ENCODE measurements at regions of chr7 and their contacts with region 1.

Region 1: GRCh38 chr7:47571331-47572093 is 10.4 kb downstream of the TNS3 start:
- DNase-seq: peak in 1 of 2 experiments; percentile 91
- H3K4me3 ChIP-seq: no peak overlapping the region
- H3K27ac ChIP-seq: no peak overlapping the region
- H3K4me1 ChIP-seq: peaks cover 47% of the 10 kb centered on the region
- H3K27me3 ChIP-seq: no peaks in the 10 kb centered on the region
- CTCF ChIP-seq: no peak

Region 2: GRCh38 chr7:47266131-47266706 is 305.3 kb before region 1 on chr7:
- CTCF ChIA-PET with region 1: no interaction called
- POLR2A ChIA-PET with region 1: no interaction called
- intact Hi-C with region 1: loop called (anchors 2 kb)
- DNase-seq: peak; percentile 49 to 73
- H3K4me3 ChIP-seq: no peak overlapping the region
- H3K27ac ChIP-seq: no peak overlapping the region
- H3K4me1 ChIP-seq: peaks cover 10% of the 10 kb centered on the region
- H3K27me3 ChIP-seq: no peaks in the 10 kb centered on the region
- CTCF ChIP-seq: peak; percentile 100

Region 3: GRCh38 chr7:47466894-47467293 is 104.6 kb before region 1 on chr7:
- CTCF ChIA-PET with region 1: no interaction called
- POLR2A ChIA-PET with region 1: no interaction called
- intact Hi-C with region 1: no loop called
- DNase-seq: no peak
- H3K4me3 ChIP-seq: no peak overlapping the region
- H3K27ac ChIP-seq: no peak overlapping the region
- H3K4me1 ChIP-seq: no peaks in the 10 kb centered on the region
- H3K27me3 ChIP-seq: no peaks in the 10 kb centered on the region
- CTCF ChIP-seq: no peak

Region 4: GRCh38 chr7:47482013-47482875 is 89.3 kb before region 1 on chr7:
- CTCF ChIA-PET with region 1: interaction called, 5 read pairs
- POLR2A ChIA-PET with region 1: no interaction called
- intact Hi-C with region 1: loop called (anchors 2 kb)
- DNase-seq: peak; percentile 82 to 99
- H3K4me3 ChIP-seq: peak overlapping the region; percentile 15; the same call in 1 of the 2 replicates
- H3K27ac ChIP-seq: peak overlapping the region; percentile 90
- H3K4me1 ChIP-seq: peaks cover 85% of the 10 kb centered on the region
- H3K27me3 ChIP-seq: no peaks in the 10 kb centered on the region
- CTCF ChIP-seq: no peak

Region 5: GRCh38 chr7:47493976-47494911 is 77.3 kb before region 1 on chr7:
- CTCF ChIA-PET with region 1: no interaction called
- POLR2A ChIA-PET with region 1: no interaction called
- intact Hi-C with region 1: no loop called
- DNase-seq: peak; percentile 80 to 86
- H3K4me3 ChIP-seq: no peak overlapping the region
- H3K27ac ChIP-seq: peak overlapping the region; percentile 57
- H3K4me1 ChIP-seq: peaks cover 26% of the 10 kb centered on the region
- H3K27me3 ChIP-seq: no peaks in the 10 kb centered on the region
- CTCF ChIP-seq: no peak

Region 6: DNA sequence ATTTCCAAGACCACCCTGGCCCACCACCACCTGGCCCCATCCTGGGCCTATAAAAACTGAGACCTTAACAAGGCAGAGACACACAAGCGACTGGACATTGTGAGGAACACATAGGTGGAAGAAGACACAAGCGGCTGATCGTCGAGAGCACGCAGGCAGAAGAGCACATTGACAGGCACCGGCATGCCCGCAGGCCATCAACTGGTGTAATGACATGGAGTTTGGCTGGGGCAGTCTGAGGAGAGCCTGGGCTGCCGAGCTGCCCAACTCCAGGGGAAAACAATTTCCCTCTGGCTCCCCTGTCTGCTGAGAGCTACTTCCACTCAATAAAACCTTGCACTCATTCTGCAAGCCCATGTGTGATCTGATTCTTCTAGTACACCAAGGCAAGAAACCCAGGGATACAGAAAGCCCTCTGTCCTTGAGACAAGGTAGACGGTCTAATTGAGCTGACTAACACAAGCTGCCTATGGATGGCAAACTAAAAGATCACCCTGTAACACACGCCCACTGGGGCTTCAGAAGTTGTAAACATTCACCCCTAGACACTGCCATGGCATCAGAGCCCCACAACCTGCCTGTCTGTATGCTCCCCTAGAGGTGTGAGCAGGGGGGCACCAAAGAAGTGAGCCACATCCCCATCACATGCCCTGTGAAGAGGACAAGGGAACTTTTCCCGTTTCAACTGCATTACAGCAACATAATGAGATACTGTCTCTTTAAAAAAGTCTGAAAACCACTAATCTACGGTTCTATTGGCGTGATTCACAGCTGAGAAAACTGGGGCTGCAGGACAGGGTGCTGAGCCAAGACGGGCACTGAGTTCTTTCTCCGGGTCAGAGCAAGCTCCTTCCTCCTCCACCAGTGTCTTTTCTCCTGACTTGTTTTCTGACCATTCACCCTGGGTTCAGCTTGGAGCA is 28.9 kb after region 1 on chr7:
- CTCF ChIA-PET with region 1: interaction called, 4 read pairs
- POLR2A ChIA-PET with region 1: interaction called, 12 read pairs
- intact Hi-C with region 1: loop called (anchors 1 kb)
- DNase-seq: peak; percentile 70 to 88
- H3K4me3 ChIP-seq: peak overlapping the region; percentile 38; the same call in 1 of the 2 replicates
- H3K27ac ChIP-seq: peak overlapping the region; percentile 98
- H3K4me1 ChIP-seq: peaks cover 68% of the 10 kb centered on the region
- H3K27me3 ChIP-seq: no peaks in the 10 kb centered on the region
- CTCF ChIP-seq: no peak

Region 7: DNA sequence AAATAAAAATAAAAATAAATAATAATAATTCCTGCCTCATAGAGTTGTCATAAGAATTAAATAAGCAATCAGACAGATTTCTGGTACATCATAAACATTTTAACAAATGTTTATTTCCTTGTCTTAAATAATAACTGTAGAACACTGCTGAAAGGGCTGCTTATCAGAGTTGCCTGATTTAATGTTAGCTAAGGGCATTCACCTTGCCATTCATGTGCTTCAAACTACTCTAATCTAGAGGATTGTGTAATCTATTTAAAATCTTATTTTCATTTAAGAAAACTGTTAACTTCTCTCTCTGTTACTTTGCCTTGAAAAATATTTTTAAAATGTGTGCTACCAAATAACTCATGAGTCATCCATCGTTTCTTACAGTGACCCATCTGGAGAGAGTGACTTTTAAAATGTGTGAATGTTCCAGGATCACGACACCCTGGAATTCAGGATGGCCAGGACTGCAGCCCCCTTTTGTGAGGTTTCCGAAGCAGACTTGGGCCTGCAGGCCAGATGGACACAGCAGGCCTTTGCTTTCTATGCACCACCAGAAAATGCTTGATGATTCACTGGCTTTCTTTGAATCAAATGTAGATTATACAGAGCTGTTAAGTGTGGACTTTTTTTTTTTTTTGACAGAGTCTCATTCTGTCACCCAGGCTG is 119.5 kb after region 1 on chr7:
- CTCF ChIA-PET with region 1: no interaction called
- POLR2A ChIA-PET with region 1: no interaction called
- intact Hi-C with region 1: loop called (anchors 1 kb)
- DNase-seq: peak; percentile 23 to 65
- H3K4me3 ChIP-seq: no peak overlapping the region
- H3K27ac ChIP-seq: peak overlapping the region; percentile 78
- H3K4me1 ChIP-seq: peaks cover 51% of the 10 kb centered on the region
- H3K27me3 ChIP-seq: no peaks in the 10 kb centered on the region
- CTCF ChIP-seq: no peak

Region 8: DNA sequence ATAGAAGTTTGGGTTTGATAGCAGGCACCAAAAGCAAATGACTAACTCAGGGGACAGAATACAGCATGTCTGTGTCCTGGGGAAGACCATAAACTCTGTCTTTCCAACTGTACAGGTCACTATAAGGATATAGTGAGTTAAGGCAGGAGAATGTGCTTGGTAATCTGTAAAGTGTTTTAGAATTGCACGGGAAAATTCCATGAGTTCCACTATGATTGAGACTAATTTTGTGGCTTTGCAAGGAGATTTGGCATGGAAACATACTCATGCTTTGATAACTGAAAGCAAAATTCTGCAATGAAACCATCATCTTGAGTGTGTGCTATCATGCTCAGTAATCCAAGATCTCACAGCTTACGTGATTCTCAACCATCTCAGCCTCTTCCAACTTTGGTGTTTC is 224.1 kb after region 1 on chr7:
- CTCF ChIA-PET with region 1: no interaction called
- POLR2A ChIA-PET with region 1: interaction called, 13 read pairs
- intact Hi-C with region 1: no loop called
- DNase-seq: peak in 1 of 2 experiments; percentile 46
- H3K4me3 ChIP-seq: no peak overlapping the region
- H3K27ac ChIP-seq: no peak overlapping the region
- H3K4me1 ChIP-seq: peaks cover 14% of the 10 kb centered on the region; the same call in 1 of the 2 replicates
- H3K27me3 ChIP-seq: no peaks in the 10 kb centered on the region
- CTCF ChIP-seq: no peak